H1 (cell line): ENCODE measurements at regions of chr1 and their contacts with region 1.

Region 1: GRCh38 chr1:178196631-178197030 is 102.7 kb downstream of the RASAL2 start:
- DNase-seq: no peak
- H3K4me3 ChIP-seq: no peak overlapping the region
- H3K27ac ChIP-seq: no peak overlapping the region
- H3K4me1 ChIP-seq: no peaks in the 10 kb centered on the region
- H3K27me3 ChIP-seq: no peaks in the 10 kb centered on the region
- CTCF ChIP-seq: no peak
- EP300 ChIP-seq: no peak
- POLR2A ChIP-seq: no peak
- RAD21 ChIP-seq: no peak

Region 2: GRCh38 chr1:178086766-178087165 is 109.9 kb before region 1 on chr1:
- CTCF ChIA-PET with region 1: no interaction called
- POLR2A ChIA-PET with region 1: no interaction called
- DNase-seq: no peak
- H3K4me3 ChIP-seq: no peak overlapping the region
- H3K27ac ChIP-seq: no peak overlapping the region
- H3K4me1 ChIP-seq: no peaks in the 10 kb centered on the region
- H3K27me3 ChIP-seq: no peaks in the 10 kb centered on the region
- CTCF ChIP-seq: no peak
- EP300 ChIP-seq: no peak
- POLR2A ChIP-seq: no peak
- RAD21 ChIP-seq: no peak

Region 3: GRCh38 chr1:178220094-178220493 is 23.5 kb after region 1 on chr1:
- CTCF ChIA-PET with region 1: interaction called, 17 read pairs
- POLR2A ChIA-PET with region 1: no interaction called
- DNase-seq: no peak
- H3K4me3 ChIP-seq: no peak overlapping the region
- H3K27ac ChIP-seq: no peak overlapping the region
- H3K4me1 ChIP-seq: no peaks in the 10 kb centered on the region
- H3K27me3 ChIP-seq: no peaks in the 10 kb centered on the region
- CTCF ChIP-seq: no peak
- EP300 ChIP-seq: no peak
- POLR2A ChIP-seq: no peak
- RAD21 ChIP-seq: no peak